ENCODE measurements at regions of chr4 and their contacts with region 1.

Region 1: GRCh38 chr4:150242820-150243458 is 164.7 kb downstream of the DCLK2 start:
- DNase-seq: peak; percentile 42
- ATAC-seq: no peak
- H3K4me3 Mint-ChIP-seq: no peak overlapping the region
- H3K27ac Mint-ChIP-seq: no peak overlapping the region
- H3K4me1 Mint-ChIP-seq: no peaks in the 10 kb centered on the region
- H3K27me3 Mint-ChIP-seq: peaks cover 7% of the 10 kb centered on the region

Region 2: GRCh38 chr4:149735796-149736195 is 507.1 kb before region 1 on chr4:
- CTCF ChIA-PET with region 1: no interaction called
- POLR2A ChIA-PET with region 1: no interaction called
- intact Hi-C with region 1: no loop called
- DNase-seq: no peak
- ATAC-seq: no peak
- H3K4me3 Mint-ChIP-seq: no peak overlapping the region
- H3K27ac Mint-ChIP-seq: no peak overlapping the region
- H3K4me1 Mint-ChIP-seq: no peaks in the 10 kb centered on the region
- H3K27me3 Mint-ChIP-seq: no peaks in the 10 kb centered on the region

Region 3: GRCh38 chr4:149914119-149915115 is 328.5 kb before region 1 on chr4:
- CTCF ChIA-PET with region 1: no interaction called
- POLR2A ChIA-PET with region 1: no interaction called
- intact Hi-C with region 1: no loop called
- DNase-seq: peak; percentile 55
- ATAC-seq: no peak
- H3K4me3 Mint-ChIP-seq: no peak overlapping the region
- H3K27ac Mint-ChIP-seq: no peak overlapping the region
- H3K4me1 Mint-ChIP-seq: no peaks in the 10 kb centered on the region
- H3K27me3 Mint-ChIP-seq: peaks cover 3% of the 10 kb centered on the region

Region 4: DNA sequence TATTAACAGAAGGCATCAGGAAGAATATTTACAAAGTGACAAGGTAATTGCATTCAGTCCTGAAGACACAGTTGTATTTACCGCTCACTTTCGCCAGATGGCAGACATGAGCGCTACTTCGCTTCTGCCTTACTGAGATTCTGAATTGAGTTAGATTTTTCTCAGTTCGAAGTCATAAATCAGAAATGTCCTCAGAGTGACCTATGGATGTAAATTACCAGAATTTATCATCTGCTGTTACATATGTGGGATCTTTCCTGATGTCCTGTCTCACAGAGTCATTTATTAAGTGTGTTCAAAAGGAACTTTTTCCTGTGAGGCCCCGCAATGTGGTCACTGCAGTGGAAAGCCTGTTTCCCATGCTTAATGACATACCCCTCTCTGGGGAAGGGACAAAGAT is 262.0 kb before region 1 on chr4:
- CTCF ChIA-PET with region 1: interaction called, 4 read pairs
- POLR2A ChIA-PET with region 1: no interaction called
- intact Hi-C with region 1: loop called (anchors 1 to 2 kb)
- DNase-seq: peak; percentile 72
- ATAC-seq: no peak
- H3K4me3 Mint-ChIP-seq: no peak overlapping the region
- H3K27ac Mint-ChIP-seq: no peak overlapping the region
- H3K4me1 Mint-ChIP-seq: peaks cover under 1% of the 10 kb centered on the region
- H3K27me3 Mint-ChIP-seq: peaks cover 2% of the 10 kb centered on the region

Region 5: DNA sequence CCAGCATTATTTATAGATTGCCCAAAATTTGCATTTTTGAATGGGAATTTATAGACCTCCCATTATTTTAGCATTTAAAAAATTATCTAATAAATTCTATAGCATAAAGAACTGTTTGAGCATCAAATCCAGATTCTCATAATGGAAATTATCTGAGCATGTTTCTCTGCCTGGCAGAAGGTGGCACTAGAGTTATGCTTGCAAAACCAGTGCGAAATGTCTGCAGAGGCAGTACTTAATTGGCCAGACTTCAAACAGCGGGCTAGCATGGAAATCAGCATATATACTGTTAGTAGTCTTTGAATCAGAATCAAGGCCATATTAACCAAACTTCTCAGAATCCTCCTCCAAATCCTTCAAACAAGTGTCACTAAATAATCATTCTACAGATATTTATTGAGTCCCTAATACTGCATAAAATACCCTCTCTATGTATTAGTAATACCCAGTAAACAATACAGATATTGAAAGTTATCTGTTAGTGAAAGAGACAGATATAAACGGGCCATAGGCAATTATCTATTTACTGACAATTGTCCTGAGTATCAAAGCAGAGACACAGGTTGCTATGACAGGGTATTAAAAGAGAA is 243.4 kb before region 1 on chr4:
- CTCF ChIA-PET with region 1: interaction called, 3 read pairs
- POLR2A ChIA-PET with region 1: no interaction called
- intact Hi-C with region 1: loop called in 1 of 2 experiments (anchors 5 kb)
- DNase-seq: peak; percentile 15
- ATAC-seq: no peak
- H3K4me3 Mint-ChIP-seq: no peak overlapping the region
- H3K27ac Mint-ChIP-seq: no peak overlapping the region
- H3K4me1 Mint-ChIP-seq: peaks cover 6% of the 10 kb centered on the region
- H3K27me3 Mint-ChIP-seq: peaks cover 10% of the 10 kb centered on the region

Region 6: GRCh38 chr4:150010525-150011126 is 232.3 kb before region 1 on chr4:
- CTCF ChIA-PET with region 1: interaction called, 4 read pairs
- POLR2A ChIA-PET with region 1: no interaction called
- intact Hi-C with region 1: loop called (anchors 1 to 2 kb)
- DNase-seq: peak; percentile 19
- ATAC-seq: no peak
- H3K4me3 Mint-ChIP-seq: no peak overlapping the region
- H3K27ac Mint-ChIP-seq: no peak overlapping the region
- H3K4me1 Mint-ChIP-seq: no peaks in the 10 kb centered on the region
- H3K27me3 Mint-ChIP-seq: peaks cover 15% of the 10 kb centered on the region

Region 7: DNA sequence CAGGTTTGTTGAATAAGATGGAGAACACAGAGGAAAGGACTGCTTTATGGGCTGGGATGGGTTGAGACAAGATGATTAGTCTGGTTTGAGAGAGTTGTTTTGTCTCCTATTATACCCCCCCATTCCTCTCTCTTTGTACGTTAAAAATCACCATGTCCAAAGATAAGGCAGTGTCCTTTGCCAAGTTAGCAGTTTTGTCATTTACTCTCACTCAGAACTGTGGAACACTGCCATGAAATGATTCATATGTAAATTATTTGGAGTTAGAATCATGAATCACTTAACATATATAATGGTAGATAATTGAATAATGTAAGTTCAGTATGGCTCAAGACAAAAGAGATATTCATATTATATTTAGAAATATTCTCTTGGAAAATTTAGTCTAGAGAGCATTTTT is 13.4 kb before region 1 on chr4:
- CTCF ChIA-PET with region 1: interaction called, 13 read pairs
- POLR2A ChIA-PET with region 1: no interaction called
- intact Hi-C with region 1: no loop called
- DNase-seq: no peak
- ATAC-seq: no peak
- H3K4me3 Mint-ChIP-seq: no peak overlapping the region
- H3K27ac Mint-ChIP-seq: no peak overlapping the region
- H3K4me1 Mint-ChIP-seq: no peaks in the 10 kb centered on the region
- H3K27me3 Mint-ChIP-seq: peaks cover 19% of the 10 kb centered on the region

Region 8: GRCh38 chr4:150264595-150265161 is 21.7 kb after region 1 on chr4:
- CTCF ChIA-PET with region 1: interaction called, 11 read pairs
- POLR2A ChIA-PET with region 1: no interaction called
- intact Hi-C with region 1: no loop called
- DNase-seq: no peak
- ATAC-seq: no peak
- H3K4me3 Mint-ChIP-seq: no peak overlapping the region
- H3K27ac Mint-ChIP-seq: no peak overlapping the region
- H3K4me1 Mint-ChIP-seq: no peaks in the 10 kb centered on the region
- H3K27me3 Mint-ChIP-seq: no peaks in the 10 kb centered on the region